Activated T-helper 2 cell treated with anti-CD3 and anti-CD28 coated beads, Interferon-gamma antibody, Interleukin-2, Interleukin-4, amounts not matched to agents 10 μg/mL and 5 μg/mL and 100 μg/mL, durations not matched to agents 14 hours and 24 hours and 36 hours (primary cell): ENCODE measurements at regions of chr17 and their contacts with region 1.

Region 1: DNA sequence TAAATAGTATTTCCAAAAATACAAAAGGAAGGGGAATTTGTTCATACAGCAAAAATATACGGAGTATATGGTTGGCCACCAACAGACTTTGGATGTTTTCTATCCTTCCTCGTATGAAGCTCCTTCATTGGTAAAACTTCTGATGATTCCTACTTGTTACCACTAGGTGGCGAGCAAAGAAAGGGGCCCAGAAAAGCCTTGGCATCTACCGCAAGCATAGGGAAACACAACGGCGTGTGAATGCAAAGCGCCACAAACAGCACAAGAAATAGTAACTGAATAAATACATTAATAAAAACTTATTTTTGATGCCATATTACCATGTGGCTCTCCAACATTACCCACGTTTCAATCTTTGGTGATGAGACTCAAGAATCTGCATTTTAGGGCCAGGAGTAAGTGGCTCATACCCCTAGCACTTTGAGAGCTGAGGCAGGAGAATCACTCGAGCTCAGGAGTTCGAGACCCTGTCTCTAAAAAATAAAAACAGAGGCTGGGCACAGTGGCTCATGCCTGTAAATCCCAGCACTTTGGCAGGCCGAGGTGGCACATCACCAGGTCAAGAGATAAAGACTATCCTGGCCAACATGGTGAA is 34.5 kb downstream of the YWHAE start:
- DNase-seq: peak; percentile 47
- H3K4me3 Mint-ChIP-seq: no peak overlapping the region
- H3K27ac Mint-ChIP-seq: peak overlapping the region; percentile 7
- H3K4me1 Mint-ChIP-seq: peaks cover 38% of the 10 kb centered on the region
- H3K27me3 Mint-ChIP-seq: no peaks in the 10 kb centered on the region

Region 2: GRCh38 chr17:1298606-1299005 is 66.9 kb before region 1 on chr17:
- intact Hi-C with region 1: no loop called
- DNase-seq: no peak
- H3K4me3 Mint-ChIP-seq: no peak overlapping the region
- H3K27ac Mint-ChIP-seq: no peak overlapping the region
- H3K4me1 Mint-ChIP-seq: peaks cover 28% of the 10 kb centered on the region
- H3K27me3 Mint-ChIP-seq: no peaks in the 10 kb centered on the region

Region 3: DNA sequence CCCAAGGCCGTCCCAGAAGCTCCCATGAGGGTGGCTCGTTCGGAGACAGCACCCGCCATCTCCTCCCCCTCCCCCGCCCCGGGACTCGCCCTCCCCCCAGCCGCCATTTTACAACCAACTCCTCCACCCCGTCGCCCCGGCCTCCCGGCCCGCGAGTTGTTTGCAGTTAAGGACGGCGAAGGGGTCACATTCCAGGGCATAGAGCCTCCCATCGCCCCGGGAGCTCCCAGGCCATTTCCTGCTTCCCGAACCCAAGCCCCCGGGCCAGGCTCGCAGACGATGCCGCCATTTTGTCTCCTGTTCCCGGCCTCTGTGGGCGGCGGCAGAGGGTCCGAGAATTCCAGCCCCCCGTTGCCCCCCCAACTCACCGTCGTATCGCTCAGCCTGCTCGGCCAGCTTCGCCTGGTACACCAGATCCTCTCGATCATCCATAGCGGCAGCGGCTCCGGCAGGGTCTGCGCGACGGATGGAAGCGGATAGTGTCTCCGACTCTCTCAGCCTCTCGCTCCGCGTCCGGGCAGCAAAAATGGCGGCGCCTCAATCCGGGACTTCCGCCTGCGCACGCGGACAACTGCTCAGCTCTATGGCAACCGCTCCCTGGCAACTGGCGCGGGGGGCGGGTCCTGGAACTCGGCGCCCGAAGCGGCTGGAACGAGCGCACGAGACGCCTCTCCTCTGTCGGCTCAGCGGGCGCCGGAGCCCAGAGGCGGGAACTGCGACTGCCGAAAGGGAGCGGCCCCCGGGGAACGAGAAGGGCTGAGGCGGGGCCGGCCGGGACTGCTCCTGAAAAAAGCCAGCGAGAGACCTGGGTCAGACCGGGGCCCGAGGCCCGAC is 34.4 kb after region 1 on chr17 and contains the start of gene YWHAE:
- intact Hi-C with region 1: loop called (anchors 5 kb)
- DNase-seq: peak; percentile 95
- H3K4me3 Mint-ChIP-seq: peak within 1 kb of the TSS; percentile 98
- H3K27ac Mint-ChIP-seq: peak within 1 kb of the TSS; percentile 100
- H3K4me1 Mint-ChIP-seq: peaks cover 19% of the 10 kb centered on the region
- H3K27me3 Mint-ChIP-seq: peaks cover 2% of the 10 kb centered on the region
- total RNA-seq, gene YWHAE: 499 and 501 TPM in 2 replicates